ENCODE measurements at regions of chr1 and their contacts with region 1.

Region 1: DNA sequence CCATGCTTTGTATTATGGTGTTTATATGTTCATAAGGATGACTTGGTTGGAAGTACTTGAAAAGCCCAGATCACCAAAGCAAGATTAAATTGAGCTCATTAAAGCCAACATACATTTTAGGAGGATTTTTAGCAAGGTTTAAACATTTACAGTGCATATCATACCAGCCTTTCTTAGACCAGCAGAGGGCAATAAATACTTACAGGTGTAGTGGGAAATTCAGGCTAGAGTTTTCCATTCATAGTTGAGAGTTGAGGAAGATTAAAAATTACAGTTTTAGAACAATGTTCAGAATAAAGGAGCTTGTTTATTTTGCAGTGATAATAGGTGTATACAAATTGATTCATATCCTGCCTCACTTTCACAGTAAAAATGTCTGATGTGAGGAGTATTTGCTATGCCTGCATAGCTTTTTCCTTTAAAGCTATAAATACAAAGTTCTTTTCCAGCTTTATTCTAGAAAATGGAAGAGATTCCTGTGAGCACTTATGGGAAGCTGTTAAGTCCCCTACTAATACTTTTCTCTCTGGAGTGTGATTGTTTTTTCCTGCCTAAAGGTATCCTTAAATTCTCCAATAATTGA is 35.3 kb downstream of the DTL start:
- DNase-seq: peak; percentile 76
- ATAC-seq: peak; percentile 99
- H3K4me3 ChIP-seq: no peak overlapping the region
- H3K27ac ChIP-seq: no peak overlapping the region
- H3K4me1 ChIP-seq: no peaks in the 10 kb centered on the region
- H3K27me3 ChIP-seq: no peaks in the 10 kb centered on the region
- CTCF ChIP-seq: peak; percentile 98

Region 2: GRCh38 chr1:211959680-211960079 is 111.1 kb before region 1 on chr1:
- CTCF ChIA-PET with region 1: no interaction called
- POLR2A ChIA-PET with region 1: no interaction called
- intact Hi-C with region 1: no loop called
- DNase-seq: no peak
- ATAC-seq: no peak
- H3K4me3 ChIP-seq: no peak overlapping the region
- H3K27ac ChIP-seq: no peak overlapping the region
- H3K4me1 ChIP-seq: no peaks in the 10 kb centered on the region
- H3K27me3 ChIP-seq: no peaks in the 10 kb centered on the region
- CTCF ChIP-seq: no peak

Region 3: GRCh38 chr1:212089560-212090163 is 18.9 kb after region 1 on chr1:
- CTCF ChIA-PET with region 1: interaction called, 11 read pairs
- POLR2A ChIA-PET with region 1: no interaction called
- intact Hi-C with region 1: no loop called
- DNase-seq: no peak
- ATAC-seq: no peak
- H3K4me3 ChIP-seq: no peak overlapping the region
- H3K27ac ChIP-seq: no peak overlapping the region
- H3K4me1 ChIP-seq: peaks cover 18% of the 10 kb centered on the region
- H3K27me3 ChIP-seq: no peaks in the 10 kb centered on the region
- CTCF ChIP-seq: no peak

Region 4: GRCh38 chr1:212219679-212220463 is 149.1 kb after region 1 on chr1:
- CTCF ChIA-PET with region 1: interaction called, 12 read pairs
- POLR2A ChIA-PET with region 1: no interaction called
- intact Hi-C with region 1: no loop called
- DNase-seq: no peak
- ATAC-seq: no peak
- H3K4me3 ChIP-seq: no peak overlapping the region
- H3K27ac ChIP-seq: no peak overlapping the region
- H3K4me1 ChIP-seq: no peaks in the 10 kb centered on the region
- H3K27me3 ChIP-seq: peaks cover 3% of the 10 kb centered on the region; the same call in 1 of the 2 replicates
- CTCF ChIP-seq: no peak

Region 5: DNA sequence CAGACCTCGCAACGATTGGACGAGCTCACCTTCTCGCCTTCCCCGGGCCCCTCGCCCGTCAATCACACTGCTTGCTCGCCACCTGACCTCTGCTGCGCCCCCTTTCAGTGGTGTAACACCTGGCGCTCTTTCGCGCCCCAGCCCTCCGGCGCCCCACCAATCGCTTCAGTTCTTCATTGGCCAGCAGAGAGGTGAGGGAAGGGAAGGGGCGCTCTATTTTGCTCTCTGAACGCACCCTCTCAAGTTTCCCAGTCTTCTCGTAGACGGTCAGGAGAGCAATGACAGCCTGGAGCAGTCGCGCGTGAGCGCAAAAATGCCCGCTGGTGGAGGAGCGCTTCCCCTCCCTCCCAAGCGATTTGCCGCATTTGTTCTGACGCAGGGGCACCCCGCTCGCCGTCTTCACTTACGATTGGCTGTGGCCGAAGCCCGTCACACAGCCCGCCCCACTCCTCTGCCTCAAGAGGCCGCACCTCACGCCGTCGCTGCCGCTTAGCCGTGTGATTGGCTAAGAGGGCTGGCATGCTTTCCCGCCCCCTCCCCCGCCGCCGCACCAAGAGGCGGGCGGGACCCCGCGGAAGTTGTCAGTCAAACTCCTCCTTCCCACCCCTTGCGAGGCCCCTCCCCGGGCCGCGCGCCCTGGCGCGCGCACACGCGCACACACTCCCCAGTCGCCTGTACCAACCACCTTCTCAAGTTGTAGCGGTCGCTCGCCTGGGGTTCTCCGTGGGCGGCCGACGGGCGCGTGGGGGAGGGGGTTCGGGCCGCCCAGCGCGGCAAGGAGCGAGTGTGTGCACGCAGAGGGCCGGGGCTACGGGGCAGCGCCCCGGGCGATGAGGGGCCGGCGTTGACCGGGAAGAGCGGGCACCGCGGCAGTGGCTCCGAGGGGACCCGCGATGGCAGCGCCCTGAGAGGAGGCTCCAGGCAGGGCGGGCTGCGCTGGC is 214.2 kb after region 1 on chr1 and contains the start of gene PPP2R5A:
- CTCF ChIA-PET with region 1: interaction called, 19 read pairs
- POLR2A ChIA-PET with region 1: interaction called, 6 read pairs
- intact Hi-C with region 1: no loop called
- DNase-seq: peak; percentile 100
- ATAC-seq: peak; percentile 89
- H3K4me3 ChIP-seq: peak within 1 kb of the TSS; percentile 79
- H3K27ac ChIP-seq: peak within 1 kb of the TSS; percentile 68
- H3K4me1 ChIP-seq: peaks cover 29% of the 10 kb centered on the region
- H3K27me3 ChIP-seq: no peaks in the 10 kb centered on the region
- CTCF ChIP-seq: peak; percentile 65
- total RNA-seq, gene PPP2R5A: 44.0 and 64.7 TPM in 2 replicates

Region 6: DNA sequence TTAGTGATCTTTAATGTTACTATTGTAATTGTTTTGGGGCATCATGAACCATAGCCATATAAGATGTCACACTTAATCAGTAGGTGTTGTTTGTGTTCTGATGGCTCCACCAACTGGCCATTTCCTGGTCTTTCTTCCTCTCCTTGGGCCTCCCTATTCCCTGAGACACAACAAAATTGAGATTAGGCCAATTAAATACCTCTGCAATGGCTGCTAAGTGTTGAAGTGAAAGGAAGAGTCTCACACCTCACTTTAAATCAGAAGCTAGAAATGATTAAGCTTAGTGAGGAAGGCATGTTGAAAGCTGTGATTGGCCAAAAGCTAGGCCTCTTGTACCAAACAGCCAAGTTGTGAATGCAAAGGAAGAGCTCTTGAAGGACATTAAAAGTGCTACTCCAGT is 245.1 kb after region 1 on chr1:
- CTCF ChIA-PET with region 1: interaction called, 17 read pairs
- POLR2A ChIA-PET with region 1: no interaction called
- intact Hi-C with region 1: loop called (anchors 1 kb)
- DNase-seq: peak; percentile 65
- ATAC-seq: peak; percentile 87
- H3K4me3 ChIP-seq: no peak overlapping the region
- H3K27ac ChIP-seq: no peak overlapping the region
- H3K4me1 ChIP-seq: no peaks in the 10 kb centered on the region
- H3K27me3 ChIP-seq: no peaks in the 10 kb centered on the region
- CTCF ChIP-seq: peak; percentile 90